ENCODE measurements at regions of chr13 and their contacts with region 1.

Region 1: GRCh38 chr13:42354241-42355091 is 82.5 kb downstream of the AKAP11 start:
- DNase-seq: peak; percentile 67
- ATAC-seq: peak; percentile 62
- H3K4me3 Mint-ChIP-seq: peak overlapping the region; percentile 67
- H3K27ac Mint-ChIP-seq: peak overlapping the region; percentile 100
- H3K4me1 Mint-ChIP-seq: peaks cover 73% of the 10 kb centered on the region
- H3K27me3 Mint-ChIP-seq: no peaks in the 10 kb centered on the region

Region 2: GRCh38 chr13:42367831-42368230 is 13.4 kb after region 1 on chr13:
- CTCF ChIA-PET with region 1: interaction called, 6 read pairs
- POLR2A ChIA-PET with region 1: interaction called, 14 read pairs
- intact Hi-C with region 1: loop called (anchors 1 kb)
- DNase-seq: no peak
- ATAC-seq: peak; percentile 20
- H3K4me3 Mint-ChIP-seq: no peak overlapping the region
- H3K27ac Mint-ChIP-seq: no peak overlapping the region
- H3K4me1 Mint-ChIP-seq: peaks cover 49% of the 10 kb centered on the region
- H3K27me3 Mint-ChIP-seq: no peaks in the 10 kb centered on the region

Region 3: GRCh38 chr13:42392716-42393572 is 38.5 kb after region 1 on chr13:
- CTCF ChIA-PET with region 1: interaction called, 9 read pairs
- POLR2A ChIA-PET with region 1: interaction called, 28 read pairs
- intact Hi-C with region 1: loop called (anchors 1 kb)
- DNase-seq: peak; percentile 46
- ATAC-seq: peak; percentile 57
- H3K4me3 Mint-ChIP-seq: peak overlapping the region; percentile 80
- H3K27ac Mint-ChIP-seq: peak overlapping the region; percentile 100
- H3K4me1 Mint-ChIP-seq: peaks cover 80% of the 10 kb centered on the region
- H3K27me3 Mint-ChIP-seq: no peaks in the 10 kb centered on the region

Region 4: DNA sequence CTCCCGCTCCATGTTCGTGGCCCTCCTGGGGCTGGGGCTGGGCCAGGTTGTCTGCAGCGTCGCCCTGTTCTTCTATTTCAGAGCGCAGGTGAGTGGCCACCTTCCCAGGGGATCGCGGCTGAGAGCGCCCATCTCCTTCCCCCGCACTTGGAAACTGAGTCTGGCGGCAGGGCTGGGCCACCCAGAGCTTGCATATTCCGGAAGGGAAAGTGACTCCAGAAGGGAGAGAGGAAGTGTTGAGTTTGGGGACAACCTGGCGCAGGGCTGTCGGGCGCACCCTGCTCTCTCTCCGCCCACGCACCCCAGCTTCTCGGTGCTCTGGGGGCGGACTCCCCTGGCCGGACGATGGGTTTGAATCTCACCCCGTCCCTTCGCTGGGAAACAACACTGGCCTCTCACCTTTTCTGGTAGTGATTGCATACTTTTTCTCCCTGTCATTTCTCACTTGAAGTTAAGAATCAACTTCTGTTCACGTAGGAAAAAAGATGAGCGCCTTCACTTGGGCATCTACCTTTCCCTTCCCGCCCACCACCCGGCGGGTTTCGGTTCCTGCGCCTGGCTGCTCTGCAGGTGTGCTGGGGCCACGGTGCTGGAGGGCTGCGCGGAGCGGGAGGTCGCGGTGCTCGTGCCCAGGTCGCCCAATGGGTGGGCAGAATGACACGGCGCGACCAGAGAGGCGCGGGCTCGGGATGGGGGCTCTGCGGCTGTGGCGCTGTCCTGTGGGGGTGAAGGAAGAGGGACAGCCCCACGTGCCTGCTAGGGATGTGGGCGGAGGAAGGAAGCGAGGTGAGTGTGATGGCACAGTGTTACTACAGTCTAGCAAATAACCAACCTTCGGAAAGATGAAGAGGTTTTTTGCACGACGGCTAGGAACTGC is 220.2 kb after region 1 on chr13:
- CTCF ChIA-PET with region 1: no interaction called
- POLR2A ChIA-PET with region 1: no interaction called
- intact Hi-C with region 1: loop called (anchors 5 to 10 kb)
- DNase-seq: peak; percentile 82
- ATAC-seq: peak; percentile 82
- H3K4me3 Mint-ChIP-seq: peak overlapping the region; percentile 77
- H3K27ac Mint-ChIP-seq: peak overlapping the region; percentile 86
- H3K4me1 Mint-ChIP-seq: peaks cover 41% of the 10 kb centered on the region
- H3K27me3 Mint-ChIP-seq: peaks cover 34% of the 10 kb centered on the region

Region 5: GRCh38 chr13:42991892-42992763 is 637.7 kb after region 1 on chr13 and contains the start of gene EPSTI1:
- CTCF ChIA-PET with region 1: no interaction called
- POLR2A ChIA-PET with region 1: no interaction called
- intact Hi-C with region 1: loop called in 1 of 2 experiments (anchors 1 kb)
- DNase-seq: peak; percentile 87
- ATAC-seq: peak; percentile 81
- H3K4me3 Mint-ChIP-seq: peak within 1 kb of the TSS; percentile 84
- H3K27ac Mint-ChIP-seq: peak within 1 kb of the TSS; percentile 99
- H3K4me1 Mint-ChIP-seq: peaks cover 45% of the 10 kb centered on the region
- H3K27me3 Mint-ChIP-seq: no peaks in the 10 kb centered on the region
- total RNA-seq, gene EPSTI1: 30.7 to 32.0 TPM

Region 6: DNA sequence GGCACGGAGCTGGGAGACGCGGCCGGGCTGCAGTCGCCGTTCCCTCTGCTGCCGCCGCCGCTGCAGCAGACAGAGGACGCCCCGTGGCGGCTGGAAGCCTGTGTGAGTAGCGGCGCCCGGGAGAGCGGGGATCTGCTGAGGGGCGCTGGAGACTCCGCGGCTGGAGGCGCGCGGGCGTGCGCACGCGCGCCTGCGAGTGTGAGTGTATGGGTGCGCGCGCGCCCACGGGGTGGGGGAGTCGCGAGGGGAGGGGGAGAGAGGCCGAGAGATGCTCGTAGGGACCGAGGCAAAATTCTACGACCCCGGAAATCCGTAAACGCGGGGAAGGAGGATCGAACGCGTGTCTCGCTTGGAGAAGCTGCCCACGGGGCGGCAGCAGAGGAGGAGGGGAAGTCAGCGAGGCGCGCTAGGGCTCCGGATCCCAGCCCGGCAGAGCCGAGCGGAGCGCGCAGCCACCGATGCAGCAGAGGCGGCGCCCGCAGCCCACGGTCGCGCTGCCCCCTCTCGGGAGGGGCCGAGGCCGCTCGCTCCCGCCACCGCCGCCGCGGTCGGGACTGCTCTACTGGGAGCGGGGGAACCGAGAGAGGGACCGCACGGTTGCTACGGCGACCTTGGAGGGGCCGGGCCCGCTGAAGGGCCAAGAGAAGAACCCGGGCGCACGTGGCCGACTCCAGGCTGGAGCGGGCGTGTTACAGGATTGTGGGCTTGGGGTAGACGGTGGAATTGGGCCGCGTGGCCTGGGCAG is 1432.5 kb after region 1 on chr13 and contains the start of gene ENOX1:
- CTCF ChIA-PET with region 1: no interaction called
- POLR2A ChIA-PET with region 1: no interaction called
- intact Hi-C with region 1: loop called in 1 of 2 experiments (anchors 1 kb)
- DNase-seq: peak; percentile 64
- ATAC-seq: peak; percentile 68
- H3K4me3 Mint-ChIP-seq: peak within 1 kb of the TSS; percentile 67
- H3K27ac Mint-ChIP-seq: no peak within 1 kb of the TSS
- H3K4me1 Mint-ChIP-seq: peaks cover 9% of the 10 kb centered on the region
- H3K27me3 Mint-ChIP-seq: peaks cover 44% of the 10 kb centered on the region
- total RNA-seq, gene ENOX1: 0.28 to 0.48 TPM

Measured in activated CD4-positive, alpha-beta T cell treated with anti-CD3 and anti-CD28 coated beads for 36 hours (primary cell).